ENCODE measurements at regions of chr10 and their contacts with region 1.

Region 1: DNA sequence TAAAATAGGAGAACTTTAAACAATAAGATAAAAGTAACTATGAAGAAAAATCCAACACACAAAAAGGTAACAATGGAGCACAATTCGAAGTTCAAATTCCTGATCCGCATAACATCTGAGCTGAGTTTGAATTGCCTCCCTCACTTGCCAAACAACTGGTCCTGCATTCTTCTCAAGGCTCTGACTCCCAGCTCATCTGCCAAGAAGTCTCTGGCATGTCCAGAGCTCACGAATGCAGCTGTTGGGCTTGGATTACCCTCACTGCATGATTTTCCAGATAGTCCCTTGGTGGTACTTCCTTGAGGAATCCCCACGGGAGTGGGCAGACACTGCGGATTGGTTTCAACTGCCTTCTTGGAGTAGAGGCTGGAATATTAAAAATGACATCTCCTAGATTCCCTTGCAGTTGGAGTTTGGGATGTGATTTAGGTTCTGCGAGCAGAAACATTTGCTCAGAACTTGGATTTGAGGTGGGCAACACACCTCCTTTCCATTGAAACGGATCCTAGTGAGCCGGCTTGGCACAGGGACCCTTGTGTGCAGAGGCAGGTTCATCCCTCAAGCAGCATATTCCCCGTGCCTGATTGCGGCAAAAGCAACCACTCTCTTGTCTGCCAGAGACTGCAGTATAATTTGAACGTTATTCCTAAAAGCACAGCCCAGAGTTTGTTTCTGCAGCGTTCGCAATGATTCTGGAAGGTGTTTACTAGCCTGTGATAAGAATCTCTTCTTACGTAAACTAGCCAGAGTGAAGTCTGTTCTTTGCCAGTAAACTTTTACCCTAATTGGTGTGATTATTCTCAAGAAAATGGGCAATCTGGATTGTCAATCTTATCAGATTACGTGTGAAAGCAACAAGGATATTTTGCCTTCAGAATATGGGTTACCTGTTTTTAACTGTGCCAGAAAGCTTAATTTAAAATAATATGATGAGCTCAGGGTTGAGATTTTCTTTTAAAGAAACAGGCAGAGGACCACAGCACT is 23.4 kb upstream of the PRKCQ start:
- DNase-seq: no peak
- ATAC-seq: no peak
- H3K4me3 Mint-ChIP-seq: no peak overlapping the region
- H3K27ac Mint-ChIP-seq: peak overlapping the region; percentile 43
- H3K4me1 Mint-ChIP-seq: peaks cover 74% of the 10 kb centered on the region
- H3K27me3 Mint-ChIP-seq: no peaks in the 10 kb centered on the region
- CTCF ChIP-seq: no peak

Region 2: DNA sequence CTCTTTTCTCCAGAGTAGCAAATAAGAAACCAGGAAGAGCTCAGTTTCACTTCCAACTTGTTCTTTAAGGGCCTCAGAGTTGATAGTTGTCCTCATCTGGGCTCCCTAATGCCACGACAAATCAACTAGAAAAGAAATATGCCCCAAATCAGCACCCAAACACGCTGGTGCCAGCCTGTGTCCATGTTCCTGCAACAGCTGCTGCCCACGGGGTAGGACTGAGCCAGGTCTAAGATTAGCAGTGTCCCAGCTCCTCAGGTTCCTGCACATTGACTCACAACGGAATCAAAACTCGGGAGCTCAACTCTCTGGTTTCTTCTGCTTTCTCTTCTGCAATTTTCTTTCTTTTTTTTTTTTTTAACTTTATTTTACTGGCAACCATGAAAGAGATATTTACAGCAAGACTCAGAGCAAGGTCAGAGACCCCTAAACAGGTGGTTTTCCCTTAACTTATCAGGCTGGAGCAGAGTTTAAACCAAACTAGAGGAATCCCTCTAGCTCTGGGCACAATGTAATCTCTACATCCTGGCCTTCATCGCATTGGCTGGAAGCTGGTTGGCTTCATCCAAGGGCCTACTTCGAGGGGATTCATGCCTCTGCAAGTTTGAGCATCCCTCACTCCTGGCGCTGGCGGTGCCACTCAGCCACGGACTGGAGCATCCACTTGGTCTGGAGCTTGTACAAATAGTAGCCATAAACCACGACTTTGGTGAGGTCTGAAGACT is 274.6 kb before region 1 on chr10:
- CTCF ChIA-PET with region 1: no interaction called
- POLR2A ChIA-PET with region 1: no interaction called
- intact Hi-C with region 1: no loop called
- DNase-seq: no peak
- ATAC-seq: no peak
- H3K4me3 Mint-ChIP-seq: no peak overlapping the region
- H3K27ac Mint-ChIP-seq: no peak overlapping the region
- H3K4me1 Mint-ChIP-seq: no peaks in the 10 kb centered on the region
- H3K27me3 Mint-ChIP-seq: no peaks in the 10 kb centered on the region
- CTCF ChIP-seq: no peak

Region 3: GRCh38 chr10:6586501-6586900 is 16.9 kb before region 1 on chr10:
- CTCF ChIA-PET with region 1: interaction called, 23 read pairs
- POLR2A ChIA-PET with region 1: interaction called, 9 read pairs
- intact Hi-C with region 1: loop called (anchors 2 kb)
- DNase-seq: peak; percentile 72
- ATAC-seq: peak; percentile 48
- H3K4me3 Mint-ChIP-seq: peak overlapping the region; percentile 98
- H3K27ac Mint-ChIP-seq: peak overlapping the region; percentile 98
- H3K4me1 Mint-ChIP-seq: peaks cover 74% of the 10 kb centered on the region
- H3K27me3 Mint-ChIP-seq: no peaks in the 10 kb centered on the region
- CTCF ChIP-seq: no peak

Region 4: DNA sequence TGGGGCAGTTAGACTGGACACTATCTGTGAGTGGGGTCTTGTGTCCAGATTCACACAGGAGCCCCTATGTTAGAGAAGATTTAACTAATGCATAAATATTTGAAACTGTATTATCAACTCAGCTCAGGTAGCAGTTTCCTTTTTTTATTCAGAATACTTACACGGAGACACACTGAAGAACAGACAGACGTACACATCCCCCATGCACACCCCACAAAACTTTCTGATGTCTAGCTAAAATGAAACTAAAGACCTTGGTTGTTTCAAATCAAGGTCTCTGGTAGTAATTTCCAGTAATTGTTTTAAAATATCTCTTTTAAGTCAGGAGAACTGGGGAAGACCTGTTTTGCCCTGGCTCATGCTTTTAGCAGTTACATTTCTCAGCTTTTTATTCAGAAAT is 32.4 kb after region 1 on chr10:
- CTCF ChIA-PET with region 1: no interaction called
- POLR2A ChIA-PET with region 1: no interaction called
- intact Hi-C with region 1: no loop called
- DNase-seq: no peak
- ATAC-seq: peak; percentile 45
- H3K4me3 Mint-ChIP-seq: no peak overlapping the region
- H3K27ac Mint-ChIP-seq: peak overlapping the region; percentile 35
- H3K4me1 Mint-ChIP-seq: peaks cover 28% of the 10 kb centered on the region
- H3K27me3 Mint-ChIP-seq: no peaks in the 10 kb centered on the region
- CTCF ChIP-seq: no peak

Measured in activated CD8-positive, alpha-beta T cell treated with anti-CD3 and anti-CD28 coated beads for 36 hours (primary cell).